GM12878 (cell line): ENCODE measurements at regions of chr5 and their contacts with region 1.

Region 1: DNA sequence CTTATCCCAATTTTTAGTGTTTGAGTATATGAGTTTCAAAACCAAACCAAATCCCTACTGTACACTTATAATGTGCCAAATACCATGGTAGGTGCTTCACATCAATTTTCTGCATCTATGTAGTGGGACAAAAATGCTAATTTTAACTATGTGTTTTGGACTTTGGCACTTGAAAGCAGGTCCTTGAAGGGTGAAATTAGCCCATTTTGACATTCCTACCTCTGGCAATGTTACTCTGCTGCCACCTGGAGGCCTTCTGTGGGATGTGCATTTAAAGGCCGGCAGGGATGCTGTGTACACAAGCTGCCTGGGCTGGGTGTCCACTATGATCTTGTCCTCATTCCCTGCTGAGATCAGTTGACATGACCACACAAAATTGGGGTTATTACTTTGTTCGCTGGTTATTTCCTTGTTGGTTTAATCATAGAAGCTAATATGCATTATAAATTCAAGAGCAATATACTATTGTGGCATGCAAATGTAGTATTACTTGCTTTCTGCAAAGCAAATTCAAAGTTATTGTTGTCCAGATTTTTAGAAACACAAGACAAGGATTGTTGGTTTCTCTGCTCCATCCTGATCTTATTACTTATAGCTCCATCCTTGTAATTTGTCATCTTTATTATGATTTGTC is 166.8 kb downstream of the ARHGEF28 start:
- DNase-seq: peak; percentile 41
- ATAC-seq: peak; percentile 79
- H3K4me3 ChIP-seq: no peak overlapping the region
- H3K27ac ChIP-seq: no peak overlapping the region
- H3K4me1 ChIP-seq: peaks cover 6% of the 10 kb centered on the region
- H3K27me3 ChIP-seq: no peaks in the 10 kb centered on the region; a peak in 1 of 4 replicates
- CTCF ChIP-seq: peak; percentile 96 to 99 (median 98); a peak in 5 of 6 replicates
- EP300 ChIP-seq: no peak
- POLR2A ChIP-seq: no peak
- RAD21 ChIP-seq: peak; percentile 99

Region 2: GRCh38 chr5:73582285-73583145 is 210.3 kb before region 1 on chr5:
- CTCF ChIA-PET with region 1: interaction called, 565 read pairs
- POLR2A ChIA-PET with region 1: interaction called, 4 read pairs
- RAD21 ChIA-PET with region 1: interaction called, 302 read pairs
- SMC1A ChIA-PET with region 1: interaction called, 415 read pairs
- in situ Hi-C with region 1: no loop called
- intact Hi-C with region 1: no loop called
- DNase-seq: no peak
- ATAC-seq: no peak
- H3K4me3 ChIP-seq: no peak overlapping the region
- H3K27ac ChIP-seq: no peak overlapping the region
- H3K4me1 ChIP-seq: no peaks in the 10 kb centered on the region
- H3K27me3 ChIP-seq: no peaks in the 10 kb centered on the region
- CTCF ChIP-seq: no peak
- EP300 ChIP-seq: no peak
- POLR2A ChIP-seq: no peak
- RAD21 ChIP-seq: no peak

Region 3: GRCh38 chr5:73673161-73673591 is 119.6 kb before region 1 on chr5:
- CTCF ChIA-PET with region 1: interaction called, 12 read pairs
- POLR2A ChIA-PET with region 1: no interaction called
- RAD21 ChIA-PET with region 1: interaction called, 4 read pairs
- SMC1A ChIA-PET with region 1: interaction called, 6 read pairs
- in situ Hi-C with region 1: no loop called
- intact Hi-C with region 1: loop called (anchors 5 kb)
- DNase-seq: no peak
- ATAC-seq: no peak
- H3K4me3 ChIP-seq: no peak overlapping the region
- H3K27ac ChIP-seq: no peak overlapping the region
- H3K4me1 ChIP-seq: peaks cover 12% of the 10 kb centered on the region
- H3K27me3 ChIP-seq: no peaks in the 10 kb centered on the region
- CTCF ChIP-seq: no peak
- EP300 ChIP-seq: no peak
- POLR2A ChIP-seq: no peak
- RAD21 ChIP-seq: no peak

Region 4: DNA sequence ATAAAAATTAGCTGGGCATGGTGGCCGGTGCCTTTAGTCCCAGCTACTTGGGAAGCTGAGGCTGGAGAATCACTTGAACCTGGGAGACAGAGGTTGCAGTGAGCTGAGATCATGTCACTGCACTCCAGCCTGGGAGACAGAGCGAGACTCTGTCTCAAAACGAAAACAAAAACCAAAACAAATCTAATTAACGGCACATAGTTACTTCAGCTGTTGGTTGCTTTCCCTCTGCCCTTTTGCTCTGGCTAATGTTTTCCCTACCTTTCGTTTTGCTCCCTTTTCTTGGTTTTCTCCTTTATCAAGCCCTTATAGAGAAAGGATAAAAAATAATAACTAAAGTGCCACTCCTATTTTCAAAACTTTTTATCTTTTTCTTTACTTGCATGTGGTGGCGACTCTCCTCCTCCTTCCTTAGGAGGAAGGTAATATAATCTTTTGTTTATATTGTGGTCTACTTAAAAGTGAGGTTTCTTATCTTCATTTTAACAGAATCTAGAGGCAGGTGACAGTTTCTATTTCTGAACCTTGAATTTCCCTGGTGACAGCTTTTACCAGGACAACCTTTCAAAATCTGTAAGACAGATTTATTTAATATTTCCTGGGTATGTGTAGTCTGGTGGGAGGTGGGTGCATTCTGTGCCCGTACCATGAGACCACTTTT is 41.4 kb before region 1 on chr5:
- CTCF ChIA-PET with region 1: interaction called, 17 read pairs
- POLR2A ChIA-PET with region 1: interaction called, 3 read pairs
- RAD21 ChIA-PET with region 1: interaction called, 22 read pairs
- SMC1A ChIA-PET with region 1: interaction called, 17 read pairs
- in situ Hi-C with region 1: no loop called
- intact Hi-C with region 1: no loop called
- DNase-seq: no peak
- ATAC-seq: peak; percentile 86
- H3K4me3 ChIP-seq: no peak overlapping the region
- H3K27ac ChIP-seq: peak overlapping the region; percentile 32
- H3K4me1 ChIP-seq: peaks cover 3% of the 10 kb centered on the region; the same call in 1 of the 2 replicates
- H3K27me3 ChIP-seq: peaks cover 0 to 4% of the 10 kb centered on the region in 2 experiments; a peak in 2 of 4 replicates
- CTCF ChIP-seq: no peak
- EP300 ChIP-seq: peak in 1 of 2 experiments; percentile 34; a peak in 1 of 4 replicates
- POLR2A ChIP-seq: no peak
- RAD21 ChIP-seq: no peak

Region 5: GRCh38 chr5:73902327-73903051 is 109.7 kb after region 1 on chr5:
- CTCF ChIA-PET with region 1: interaction called, 10 read pairs
- POLR2A ChIA-PET with region 1: no interaction called
- RAD21 ChIA-PET with region 1: interaction called, 10 read pairs
- SMC1A ChIA-PET with region 1: interaction called, 5 read pairs
- in situ Hi-C with region 1: no loop called
- intact Hi-C with region 1: loop called (anchors 5 kb)
- DNase-seq: peak; percentile 55
- ATAC-seq: peak; percentile 3; the same call in 1 of the 3 replicates
- H3K4me3 ChIP-seq: no peak overlapping the region
- H3K27ac ChIP-seq: no peak overlapping the region
- H3K4me1 ChIP-seq: peaks cover 12% of the 10 kb centered on the region
- H3K27me3 ChIP-seq: peaks cover 0 to 7% of the 10 kb centered on the region in 2 experiments; a peak in 1 of 4 replicates
- CTCF ChIP-seq: peak; percentile 33 to 72 (median 68); a peak in 5 of 6 replicates
- EP300 ChIP-seq: no peak
- POLR2A ChIP-seq: no peak
- RAD21 ChIP-seq: peak; percentile 86